MCF 10A (cell line): ENCODE measurements at regions of chr1 and their contacts with region 1.

Region 1: DNA sequence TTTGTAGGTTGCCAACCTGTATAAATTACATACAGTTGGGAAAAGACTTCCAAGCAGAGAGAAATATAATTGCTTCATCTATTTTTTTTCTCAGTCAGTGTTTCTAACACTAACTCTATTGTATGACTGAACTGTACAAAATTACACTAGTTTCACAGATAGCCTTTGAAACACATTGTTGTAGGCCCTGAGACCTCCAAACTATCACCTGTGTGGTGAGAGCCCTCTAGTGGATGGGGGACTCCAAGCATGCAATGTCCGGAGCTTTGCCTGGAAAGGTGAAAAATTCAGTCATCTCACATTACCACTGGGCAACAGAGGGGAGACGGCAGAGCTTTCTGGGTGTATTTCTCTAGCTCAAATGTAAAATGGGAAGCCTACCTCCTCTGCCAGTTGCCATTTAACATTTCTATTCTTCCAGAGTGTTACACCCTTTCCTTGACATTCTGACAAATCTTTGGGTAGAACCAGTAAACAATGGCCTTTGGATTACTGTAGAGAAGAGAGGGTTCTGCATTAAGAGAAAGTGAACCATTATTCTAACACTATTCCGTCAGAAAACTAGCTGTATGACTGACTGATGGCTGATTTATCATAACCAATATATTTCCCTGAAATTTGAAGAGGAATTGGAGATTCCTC is 212.2 kb downstream of the LYPLAL1 start:
- DNase-seq: peak; percentile 87
- H3K4me3 Mint-ChIP-seq: no peak overlapping the region
- H3K27ac Mint-ChIP-seq: no peak overlapping the region
- H3K4me1 Mint-ChIP-seq: no peaks in the 10 kb centered on the region
- H3K27me3 Mint-ChIP-seq: peaks cover 63% of the 10 kb centered on the region
- CTCF ChIP-seq: peak; percentile 96

Region 2: DNA sequence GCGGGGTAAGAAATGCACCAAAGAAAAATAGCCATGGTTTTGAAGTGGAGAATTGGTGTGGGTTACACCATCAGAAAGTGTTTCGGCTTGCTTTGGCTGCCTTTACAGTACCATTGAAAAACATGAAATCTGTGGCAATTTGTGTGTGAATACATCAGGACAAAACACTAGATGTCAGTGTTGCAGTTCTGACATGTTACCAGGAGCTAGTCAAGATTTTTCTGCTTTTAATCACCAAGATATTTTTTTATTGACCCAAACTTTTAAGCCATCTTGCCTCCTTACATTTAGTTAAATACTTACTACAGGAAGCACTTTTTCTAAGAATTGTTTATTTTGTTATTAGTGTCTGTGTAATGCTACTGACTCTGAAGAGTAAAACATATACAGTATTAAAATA is 1086.5 kb before region 1 on chr1:
- CTCF ChIA-PET with region 1: interaction called, 14 read pairs
- POLR2A ChIA-PET with region 1: no interaction called
- intact Hi-C with region 1: no loop called
- DNase-seq: peak; percentile 70
- H3K4me3 Mint-ChIP-seq: no peak overlapping the region
- H3K27ac Mint-ChIP-seq: no peak overlapping the region
- H3K4me1 Mint-ChIP-seq: peaks cover 41% of the 10 kb centered on the region
- H3K27me3 Mint-ChIP-seq: no peaks in the 10 kb centered on the region
- CTCF ChIP-seq: peak; percentile 68

Region 3: DNA sequence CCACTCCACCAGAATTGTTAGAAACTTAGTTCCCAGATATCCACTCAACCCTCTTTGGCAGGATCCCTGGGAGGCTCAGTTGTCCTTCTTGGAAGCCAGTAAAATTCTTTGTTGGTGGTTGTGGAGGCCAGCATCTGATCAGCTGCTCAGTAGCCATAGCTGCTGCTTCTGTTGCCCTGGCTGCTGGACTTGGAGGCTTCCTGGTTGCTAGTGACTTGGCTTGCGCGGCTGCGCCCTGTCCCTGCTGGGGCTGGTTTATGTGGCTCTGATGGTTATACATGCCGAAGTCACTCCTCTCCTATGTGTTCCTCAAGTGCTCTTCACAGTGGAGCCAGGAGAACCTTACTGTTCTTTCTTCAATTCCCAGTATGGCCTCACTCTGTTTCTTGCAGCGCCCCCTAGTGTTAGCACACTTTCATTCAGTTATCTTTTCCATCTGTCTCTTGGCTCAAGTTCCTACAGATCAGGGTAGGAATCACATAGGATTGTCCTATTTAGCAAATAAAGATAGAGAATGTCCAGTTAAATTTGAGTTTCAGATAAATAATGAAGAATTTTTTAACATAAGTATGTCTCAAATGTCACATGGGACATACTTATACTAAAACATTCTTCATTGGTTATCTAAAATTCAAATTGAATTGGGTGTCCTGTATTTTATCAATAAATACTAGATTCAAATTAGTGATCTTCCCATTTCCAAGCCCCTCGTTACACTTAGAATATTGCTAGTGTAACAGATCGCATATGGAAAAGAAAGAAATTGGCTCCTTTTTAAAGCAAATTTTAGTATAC is 864.3 kb before region 1 on chr1:
- CTCF ChIA-PET with region 1: no interaction called
- POLR2A ChIA-PET with region 1: no interaction called
- intact Hi-C with region 1: loop called (anchors 5 kb)
- DNase-seq: peak; percentile 92
- H3K4me3 Mint-ChIP-seq: no peak overlapping the region
- H3K27ac Mint-ChIP-seq: no peak overlapping the region
- H3K4me1 Mint-ChIP-seq: peaks cover 13% of the 10 kb centered on the region
- H3K27me3 Mint-ChIP-seq: no peaks in the 10 kb centered on the region
- CTCF ChIP-seq: peak; percentile 90

Region 4: GRCh38 chr1:218983887-218984286 is 402.0 kb before region 1 on chr1:
- CTCF ChIA-PET with region 1: no interaction called
- POLR2A ChIA-PET with region 1: no interaction called
- intact Hi-C with region 1: no loop called
- DNase-seq: no peak
- H3K4me3 Mint-ChIP-seq: no peak overlapping the region
- H3K27ac Mint-ChIP-seq: no peak overlapping the region
- H3K4me1 Mint-ChIP-seq: no peaks in the 10 kb centered on the region
- H3K27me3 Mint-ChIP-seq: no peaks in the 10 kb centered on the region
- CTCF ChIP-seq: peak; percentile 5

Region 5: GRCh38 chr1:219201656-219202055 is 184.3 kb before region 1 on chr1:
- CTCF ChIA-PET with region 1: interaction called, 13 read pairs
- POLR2A ChIA-PET with region 1: no interaction called
- intact Hi-C with region 1: loop called (anchors 1 kb)
- DNase-seq: no peak
- H3K4me3 Mint-ChIP-seq: no peak overlapping the region
- H3K27ac Mint-ChIP-seq: no peak overlapping the region
- H3K4me1 Mint-ChIP-seq: no peaks in the 10 kb centered on the region
- H3K27me3 Mint-ChIP-seq: no peaks in the 10 kb centered on the region
- CTCF ChIP-seq: no peak

Region 6: GRCh38 chr1:219340796-219341195 is 45.1 kb before region 1 on chr1:
- CTCF ChIA-PET with region 1: interaction called, 10 read pairs
- POLR2A ChIA-PET with region 1: no interaction called
- intact Hi-C with region 1: no loop called
- DNase-seq: no peak
- H3K4me3 Mint-ChIP-seq: no peak overlapping the region
- H3K27ac Mint-ChIP-seq: no peak overlapping the region
- H3K4me1 Mint-ChIP-seq: no peaks in the 10 kb centered on the region
- H3K27me3 Mint-ChIP-seq: peaks cover 100% of the 10 kb centered on the region
- CTCF ChIP-seq: no peak

Region 7: GRCh38 chr1:219398815-219399396 is 13.0 kb after region 1 on chr1:
- CTCF ChIA-PET with region 1: interaction called, 17 read pairs
- POLR2A ChIA-PET with region 1: no interaction called
- intact Hi-C with region 1: no loop called
- DNase-seq: no peak
- H3K4me3 Mint-ChIP-seq: no peak overlapping the region
- H3K27ac Mint-ChIP-seq: no peak overlapping the region
- H3K4me1 Mint-ChIP-seq: no peaks in the 10 kb centered on the region
- H3K27me3 Mint-ChIP-seq: peaks cover 19% of the 10 kb centered on the region
- CTCF ChIP-seq: no peak